ENCODE measurements at regions of chr9 and their contacts with region 1.

Region 1: DNA sequence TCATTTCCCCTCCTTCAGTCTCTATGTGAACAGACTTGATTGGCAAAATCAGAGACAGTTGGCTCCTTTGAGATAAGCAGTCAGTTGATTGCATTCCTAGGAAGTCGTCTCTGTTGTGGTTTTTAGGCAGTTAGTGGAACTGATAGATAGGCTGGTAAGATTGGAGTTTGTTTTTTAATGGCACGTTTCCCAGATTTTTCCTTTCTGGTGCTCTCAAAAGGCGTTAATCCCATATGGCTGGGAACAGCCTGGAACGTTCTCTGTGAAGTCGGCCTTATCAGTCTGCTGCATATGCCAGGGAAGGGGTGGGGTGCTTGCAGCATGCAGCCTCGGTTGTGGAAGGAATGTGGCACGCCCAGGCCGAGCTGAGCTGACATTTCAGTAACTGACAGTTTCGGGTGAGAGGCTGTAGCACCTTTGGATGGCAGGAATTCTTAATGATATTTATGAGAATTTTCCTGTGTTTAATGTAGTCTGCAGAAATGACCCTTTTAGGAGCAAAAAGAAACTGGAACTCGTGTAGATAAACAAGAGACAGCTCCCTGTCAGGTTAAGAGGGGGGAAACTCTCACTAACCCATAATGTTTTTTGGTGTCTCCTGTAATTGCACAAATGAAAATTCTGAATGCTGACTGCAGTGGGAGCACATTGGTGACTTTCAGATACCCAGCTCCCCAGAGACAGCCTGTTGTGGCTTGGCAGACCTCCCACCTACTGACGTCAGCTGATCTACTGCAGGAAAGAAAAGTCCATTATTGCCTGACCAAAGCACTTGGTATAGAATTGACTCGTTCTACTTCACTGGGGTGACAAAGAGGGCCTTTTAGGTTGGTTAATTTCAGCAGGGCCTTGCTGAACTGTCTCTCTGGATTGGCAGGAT is 6.3 kb downstream of the SPTAN1 start:
- DNase-seq: peak; percentile 87
- H3K4me3 ChIP-seq: no peak overlapping the region
- H3K27ac ChIP-seq: peak overlapping the region; percentile 57 to 86 (median 85)
- H3K4me1 ChIP-seq: peaks cover 45 to 55% of the 10 kb centered on the region in 2 donors
- H3K27me3 ChIP-seq: no peaks in the 10 kb centered on the region
- CTCF ChIP-seq: no peak
- POLR2A ChIP-seq: no peak

Region 2: GRCh38 chr9:128275996-128276573 is 282.6 kb before region 1 on chr9 and contains the starts of genes GOLGA2 and SWI5:
- intact Hi-C with region 1: no loop called
- DNase-seq: peak; percentile 100
- H3K4me3 ChIP-seq: peak within 1 kb of the TSS; percentile 66 to 97 (median 70)
- H3K27ac ChIP-seq: peak within 1 kb of the TSS; percentile 16 to 88 (median 85)
- H3K4me1 ChIP-seq: peaks cover 22 to 44% of the 10 kb centered on the region in 2 donors
- H3K27me3 ChIP-seq: no peaks in the 10 kb centered on the region
- CTCF ChIP-seq: no peak
- POLR2A ChIP-seq: peak; percentile 90 to 92
- total RNA-seq, gene GOLGA2: 94.6 to 140 (median 118) TPM
- total RNA-seq, gene SWI5: 18.5 to 50.2 (median 49.2) TPM

Region 3: DNA sequence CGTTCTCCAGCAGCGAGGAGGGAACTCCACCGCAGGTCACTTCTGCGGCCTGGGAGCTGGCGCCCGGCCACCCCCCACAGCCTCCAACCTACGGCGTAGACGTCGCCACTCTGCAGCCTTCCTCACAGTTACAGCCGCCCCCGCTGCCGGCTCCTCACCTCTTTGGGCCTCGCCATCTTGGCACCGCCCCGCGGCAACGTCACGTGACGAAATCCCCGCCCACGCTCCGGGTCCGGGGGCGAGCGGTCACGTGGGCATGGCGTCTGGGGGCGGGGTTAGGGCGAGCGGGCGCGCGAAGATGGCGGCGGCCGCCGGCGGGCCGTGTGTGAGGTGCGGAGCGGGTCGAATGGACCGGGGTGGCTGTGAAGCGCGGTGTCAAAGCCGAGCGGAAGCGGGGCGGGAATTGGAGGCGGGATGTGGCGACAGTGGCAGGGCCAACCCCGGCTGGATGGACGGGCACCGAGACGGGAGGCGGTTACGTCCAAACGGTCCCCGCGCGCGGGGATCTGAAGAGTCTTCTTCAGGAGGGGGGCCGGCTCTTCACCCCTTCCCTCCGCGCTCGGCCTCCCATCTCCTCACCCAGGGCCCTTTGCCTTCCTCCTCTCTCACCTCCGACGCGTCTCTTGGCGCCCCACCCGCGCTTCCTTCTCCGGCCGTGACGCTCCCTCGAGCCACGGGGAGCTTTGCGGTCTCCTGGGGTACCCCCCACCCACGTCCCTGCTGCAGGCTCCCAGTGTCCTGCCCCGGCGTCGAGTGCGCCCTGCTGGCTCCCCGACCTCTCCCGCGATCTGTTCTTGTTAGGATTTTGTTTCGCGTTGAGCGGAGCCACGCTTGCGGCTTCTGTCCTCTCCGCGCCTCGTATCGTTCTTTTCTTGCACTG is 389.0 kb after region 1 on chr9 and contains the starts of genes DOLK and NUP188:
- intact Hi-C with region 1: loop called (anchors 5 kb)
- DNase-seq: peak; percentile 95 to 96
- H3K4me3 ChIP-seq: peak within 1 kb of the TSS; percentile 57 to 78 (median 69)
- H3K27ac ChIP-seq: peak within 1 kb of the TSS; percentile 57 to 90 (median 84)
- H3K4me1 ChIP-seq: peaks cover 11 to 19% of the 10 kb centered on the region in 2 donors
- H3K27me3 ChIP-seq: no peaks in the 10 kb centered on the region
- CTCF ChIP-seq: no peak
- POLR2A ChIP-seq: peak; percentile 68 to 97
- total RNA-seq, gene DOLK: 21.1 to 25.2 (median 22.2) TPM
- total RNA-seq, gene NUP188: 27.1 to 78.2 (median 35.8) TPM

Measured in thyroid gland (tissue), 4 donors.